AG04449 (cell line): ENCODE measurements at regions of chr11 and their contacts with region 1.

Region 1: DNA sequence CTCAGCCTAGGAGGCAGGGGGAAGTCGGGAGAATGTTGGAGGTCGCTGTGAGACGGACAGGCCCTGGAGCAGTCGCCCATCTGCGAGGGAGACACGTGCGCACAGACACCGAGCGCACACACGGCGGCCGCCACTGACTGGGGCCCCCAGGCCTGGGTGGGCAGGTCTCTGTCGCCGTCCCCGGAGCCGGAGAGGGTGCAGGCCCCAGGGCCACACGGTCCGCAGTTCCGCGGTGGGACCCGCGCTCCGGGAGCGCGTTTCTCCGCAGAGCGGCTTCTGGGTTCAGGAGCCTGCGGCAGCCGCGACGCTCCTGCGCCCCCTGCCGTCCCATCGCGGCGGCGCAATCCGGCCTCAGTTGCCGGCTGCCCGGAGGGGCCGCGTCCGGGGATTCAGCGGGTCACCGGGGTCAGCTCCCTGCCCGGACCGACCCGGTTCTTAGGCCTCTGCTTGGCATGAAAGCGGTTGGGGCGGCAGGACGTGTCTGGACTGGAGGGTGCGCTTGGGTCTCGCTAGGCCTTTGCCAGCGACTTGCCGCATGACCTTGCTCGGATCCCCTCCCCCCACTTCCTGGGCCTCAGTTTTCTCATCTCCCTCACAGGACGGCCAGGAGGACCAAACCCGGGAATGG is 31.2 kb downstream of the PDE2A start:
- DNase-seq: no peak
- H3K4me3 ChIP-seq: peak overlapping the region; percentile 52
- CTCF ChIP-seq: peak; percentile 93

Region 2: DNA sequence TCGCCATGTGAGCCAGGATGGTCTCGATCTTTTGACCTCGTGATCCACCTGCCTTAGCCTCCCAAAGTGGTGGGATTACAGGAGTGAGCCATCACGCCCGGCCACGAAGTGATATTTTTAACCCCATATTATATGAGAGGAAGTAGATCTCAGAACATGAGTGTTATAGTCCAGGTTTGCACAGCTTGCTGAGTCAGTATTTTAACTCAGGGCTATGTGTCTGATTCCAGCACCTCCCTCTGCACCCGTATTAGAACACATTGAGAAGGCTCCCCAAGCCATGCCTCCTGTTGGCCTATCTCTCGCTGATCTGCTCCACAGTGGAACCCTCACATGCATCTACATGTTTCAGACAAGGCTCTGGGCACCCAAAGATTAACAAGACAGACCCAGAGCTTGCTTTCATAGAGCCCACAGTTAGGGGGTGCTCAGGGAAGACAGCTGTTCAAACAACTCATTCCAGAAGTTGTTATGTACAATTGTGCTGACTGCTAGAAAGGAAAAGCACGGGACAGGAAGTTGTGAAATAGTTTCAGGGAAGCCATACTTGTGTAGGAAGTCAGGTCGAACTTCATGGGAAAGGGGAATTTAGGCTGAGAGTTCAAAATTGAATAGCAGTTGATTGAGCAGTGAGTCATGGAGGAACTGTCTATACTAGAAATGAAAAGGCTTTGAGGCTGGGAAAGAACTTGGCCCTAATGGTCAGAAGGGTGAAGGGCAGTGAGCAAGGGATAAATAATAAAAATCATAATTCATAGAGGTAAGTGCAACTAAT is 159.4 kb before region 1 on chr11:
- CTCF ChIA-PET with region 1: interaction called, 14 read pairs
- POLR2A ChIA-PET with region 1: no interaction called
- DNase-seq: no peak
- H3K4me3 ChIP-seq: no peak overlapping the region
- CTCF ChIP-seq: no peak

Region 3: DNA sequence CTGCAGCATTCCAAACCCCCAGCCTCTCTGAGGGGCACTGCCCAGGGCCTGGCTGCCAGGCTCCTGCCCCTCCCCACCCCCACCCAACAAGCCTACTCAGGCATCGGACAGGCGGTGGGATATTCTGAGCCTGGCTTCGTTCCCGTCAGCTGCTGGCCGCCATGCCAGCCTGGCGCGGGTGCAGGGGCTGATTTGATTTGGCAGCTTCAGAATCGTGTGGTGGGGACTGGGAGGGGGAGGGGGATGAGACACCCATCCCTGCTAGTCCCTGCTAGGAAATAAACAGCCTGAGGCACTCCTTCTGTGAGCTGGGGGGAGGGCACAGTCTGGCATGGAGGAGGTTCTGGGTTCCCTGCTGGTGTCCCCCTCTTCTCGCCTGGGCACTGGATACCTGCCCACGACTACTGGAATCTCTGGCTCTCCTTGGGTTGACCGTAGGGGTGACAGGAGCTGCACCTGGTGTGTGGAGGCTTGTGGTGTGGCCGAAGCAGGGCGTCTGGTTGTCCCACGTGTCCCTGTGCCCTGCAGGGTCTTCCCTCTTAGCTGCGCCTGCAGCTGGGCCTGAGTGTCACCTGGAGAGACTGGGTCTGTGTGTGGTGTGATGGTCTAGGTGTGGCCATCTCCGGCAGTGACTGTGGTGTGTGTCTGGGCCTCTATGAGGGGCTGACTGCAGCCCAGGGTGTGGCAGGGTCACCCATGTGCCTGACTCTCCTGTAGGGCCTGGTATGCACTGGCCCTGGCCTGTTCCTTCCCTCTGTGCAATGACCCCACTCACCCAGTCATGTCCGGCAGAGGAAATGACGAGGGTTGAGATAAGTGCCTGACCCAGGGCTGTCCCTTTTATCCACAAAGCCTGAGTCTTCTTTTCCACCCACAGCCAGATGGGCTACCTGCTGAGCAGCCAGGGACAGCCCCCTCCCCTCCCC is 10.9 kb before region 1 on chr11:
- CTCF ChIA-PET with region 1: interaction called, 18 read pairs
- POLR2A ChIA-PET with region 1: no interaction called
- DNase-seq: no peak
- H3K4me3 ChIP-seq: no peak overlapping the region
- CTCF ChIP-seq: no peak

Region 4: DNA sequence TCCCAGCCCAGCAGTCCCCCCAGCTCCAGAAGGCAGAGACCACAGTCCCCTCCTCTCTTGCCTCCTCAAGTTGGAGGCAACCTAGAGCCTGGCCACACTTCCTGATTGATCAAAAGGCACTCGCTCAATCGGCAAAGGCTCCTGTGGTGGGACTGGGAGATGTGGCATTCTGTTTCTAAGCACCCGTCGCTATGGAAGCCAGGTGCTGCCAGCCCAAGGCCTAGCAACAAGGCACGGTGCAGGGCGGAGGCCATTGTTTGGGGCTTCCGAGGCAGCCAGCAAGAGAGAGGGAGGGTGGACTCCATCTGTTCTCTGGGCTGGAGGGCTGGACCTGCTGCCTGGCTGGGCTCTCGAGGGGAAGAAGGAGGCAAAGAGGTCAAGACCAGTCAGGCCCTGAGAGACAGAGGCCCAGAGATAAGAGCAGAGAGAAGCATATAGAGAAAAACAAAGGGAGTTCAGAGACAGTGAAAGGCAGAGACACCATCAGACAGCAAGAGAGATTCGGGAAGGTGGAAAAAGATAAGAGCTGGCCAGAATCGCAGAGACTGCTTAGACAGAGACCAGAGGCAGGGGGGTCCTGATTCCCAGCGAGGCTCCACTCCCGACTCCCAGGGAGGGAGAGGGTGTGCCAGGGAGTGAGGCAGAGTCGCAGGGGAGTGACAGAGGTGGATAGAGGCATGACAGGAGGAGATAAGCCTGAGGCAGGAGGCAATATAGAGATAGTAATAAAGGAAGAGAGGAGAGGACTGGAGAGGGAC is 10.1 kb after region 1 on chr11:
- CTCF ChIA-PET with region 1: interaction called, 28 read pairs
- POLR2A ChIA-PET with region 1: no interaction called
- DNase-seq: no peak
- H3K4me3 ChIP-seq: no peak overlapping the region
- CTCF ChIP-seq: no peak